ENCODE measurements at regions of chr7 and their contacts with region 1.

Region 1: DNA sequence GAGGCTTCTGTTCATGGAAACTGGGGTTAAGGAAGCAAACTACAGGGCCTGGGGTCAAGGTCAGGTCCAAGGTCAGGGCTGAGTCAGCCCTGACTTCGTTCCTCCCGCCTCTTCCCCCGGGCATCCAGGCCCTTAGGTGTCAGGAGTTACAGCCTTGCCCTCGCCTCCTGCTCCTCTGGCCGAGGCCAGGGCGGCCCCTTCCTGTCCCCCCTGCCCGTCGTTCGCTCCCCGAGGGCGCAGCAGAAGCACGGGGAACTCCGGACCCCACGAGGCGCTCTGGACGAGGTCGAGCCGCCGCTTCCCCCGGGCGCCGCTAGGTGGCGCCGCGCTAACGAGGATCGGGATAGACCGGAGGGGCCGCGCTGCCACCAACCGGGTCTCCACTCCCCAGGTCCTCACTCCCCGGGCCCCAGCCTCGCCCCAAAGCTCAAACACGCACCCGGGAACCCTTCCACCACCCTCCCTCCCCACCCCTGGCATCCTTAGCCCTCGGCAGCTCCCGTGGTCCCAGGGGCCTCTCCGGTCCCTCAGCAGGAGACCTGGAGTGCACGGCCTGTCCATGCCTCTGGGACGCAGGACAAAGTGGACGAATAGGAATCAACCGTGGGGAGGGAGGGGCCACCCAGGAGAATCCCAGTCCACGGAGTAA is 59.2 kb upstream of the MYL10 start:
- DNase-seq: peak; percentile 81 to 91 (median 88)
- ATAC-seq: peak; percentile 73
- H3K4me3 ChIP-seq: no peak overlapping the region
- H3K4me1 ChIP-seq: peaks cover 9% of the 10 kb centered on the region
- CTCF ChIP-seq: peak; percentile 96

Region 2: GRCh38 chr7:101410743-101411507 is 277.4 kb before region 1 on chr7:
- intact Hi-C with region 1: no loop called
- DNase-seq: peak in 2 of 3 donors; percentile 45
- ATAC-seq: peak; percentile 69
- H3K4me3 ChIP-seq: no peak overlapping the region
- H3K4me1 ChIP-seq: no peaks in the 10 kb centered on the region
- CTCF ChIP-seq: peak; percentile 78

Region 3: DNA sequence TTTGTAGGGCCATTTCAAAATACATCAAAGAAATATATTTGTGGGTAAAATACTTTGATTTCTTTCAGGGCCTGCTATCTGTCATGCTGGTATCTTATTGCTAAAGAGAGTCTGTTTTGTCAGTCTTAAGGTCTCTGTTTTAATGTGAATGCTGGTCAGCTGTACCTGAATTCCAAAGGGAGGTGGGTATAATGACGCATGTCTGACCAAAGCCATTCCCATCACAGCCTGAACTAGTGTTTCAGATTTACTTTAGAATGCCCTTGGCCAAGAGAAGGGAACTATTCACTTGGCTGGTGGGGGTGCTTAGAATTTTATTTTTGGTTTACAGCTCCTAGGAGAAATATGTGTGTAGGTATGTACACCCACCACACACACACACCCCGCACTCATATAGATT is 28.6 kb before region 1 on chr7:
- intact Hi-C with region 1: no loop called
- DNase-seq: no peak
- ATAC-seq: no peak
- H3K4me3 ChIP-seq: no peak overlapping the region
- H3K4me1 ChIP-seq: peaks cover 4% of the 10 kb centered on the region
- CTCF ChIP-seq: no peak

Region 4: DNA sequence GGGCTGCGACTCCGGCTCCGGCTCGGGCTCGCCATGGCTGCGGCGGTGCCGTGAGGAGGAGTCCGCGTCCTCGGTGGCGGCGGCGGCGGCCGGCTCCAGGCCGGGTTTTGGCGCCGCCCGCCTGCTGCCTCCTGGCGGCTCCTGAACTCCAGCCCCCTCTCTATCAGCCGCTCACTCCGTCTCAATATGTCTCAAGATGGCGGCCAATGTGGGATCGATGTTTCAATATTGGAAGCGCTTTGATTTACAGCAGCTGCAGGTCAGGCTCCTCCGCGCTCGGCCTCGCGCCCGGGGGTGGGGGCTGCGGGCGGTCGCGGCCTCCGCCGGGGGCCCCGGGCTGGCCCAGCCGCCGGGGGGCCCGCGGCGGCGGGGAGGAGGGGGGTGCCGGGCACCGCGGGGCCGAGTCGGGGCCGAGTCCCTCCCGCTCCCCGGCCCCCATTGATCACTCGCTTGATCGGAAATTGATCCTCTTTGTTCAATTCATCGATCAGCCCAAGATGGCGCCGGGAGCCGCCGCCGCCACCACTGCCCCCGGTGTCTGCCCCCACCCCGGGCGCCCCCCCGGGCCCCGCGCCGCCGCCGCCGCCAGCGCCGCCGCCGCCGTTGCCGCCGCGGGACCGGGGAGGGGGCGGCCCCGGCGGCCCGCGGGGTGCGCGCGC is 127.7 kb after region 1 on chr7:
- intact Hi-C with region 1: loop called (anchors 10 kb)
- DNase-seq: peak; percentile 77 to 83 (median 80)
- ATAC-seq: peak; percentile 78
- H3K4me3 ChIP-seq: peak overlapping the region; percentile 54
- H3K4me1 ChIP-seq: peaks cover 5% of the 10 kb centered on the region
- CTCF ChIP-seq: no peak

Region 5: DNA sequence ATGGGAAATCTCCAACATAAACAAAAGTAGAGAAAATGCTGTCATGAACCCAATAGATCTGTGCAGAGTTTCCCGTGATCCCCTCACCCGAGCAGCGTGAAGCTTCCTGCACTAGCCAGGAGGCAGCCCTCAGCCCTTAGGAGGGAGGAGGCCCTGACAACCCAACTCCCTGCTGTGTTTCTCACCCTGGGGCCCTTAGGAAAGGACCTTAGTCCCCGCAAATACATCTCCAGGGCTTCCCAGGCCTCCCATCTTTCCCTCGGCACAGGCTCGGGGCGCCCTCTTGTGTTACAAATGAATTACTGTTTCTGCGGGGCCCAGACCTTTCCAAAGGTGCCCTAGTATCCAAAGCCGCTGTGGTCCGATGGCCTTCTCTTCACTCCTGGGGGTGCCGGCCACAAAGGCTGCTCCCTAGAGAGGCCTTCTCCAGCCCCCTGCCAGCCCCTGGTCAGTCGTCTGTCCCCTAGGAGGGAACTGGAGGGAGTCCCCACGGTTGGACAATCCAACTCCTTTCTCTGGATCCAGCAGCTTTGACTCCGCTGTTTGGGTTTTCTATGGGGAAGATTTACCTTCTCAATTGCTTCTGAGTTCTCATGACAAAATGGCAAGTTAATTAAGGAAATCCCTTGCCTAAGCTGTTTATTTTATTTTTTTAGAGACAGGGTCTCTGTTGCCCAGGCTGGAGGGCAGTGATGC is 548.4 kb after region 1 on chr7:
- intact Hi-C with region 1: loop called in 1 of 2 experiments (anchors 5 kb)
- DNase-seq: peak in 2 of 3 donors; percentile 68 to 72
- ATAC-seq: peak; percentile 93
- H3K4me3 ChIP-seq: no peak overlapping the region
- H3K4me1 ChIP-seq: no peaks in the 10 kb centered on the region
- CTCF ChIP-seq: peak; percentile 49